ENCODE measurements at regions of chr3 and their contacts with region 1.

Region 1: GRCh38 chr3:68458581-68458980 is 473.8 kb downstream of the TAFA4 start:
- DNase-seq: no peak
- H3K4me3 ChIP-seq: no peak overlapping the region
- H3K27ac ChIP-seq: no peak overlapping the region
- H3K4me1 ChIP-seq: no peaks in the 10 kb centered on the region
- H3K27me3 ChIP-seq: no peaks in the 10 kb centered on the region
- CTCF ChIP-seq: no peak
- EP300 ChIP-seq: no peak
- POLR2A ChIP-seq: no peak
- RAD21 ChIP-seq: no peak

Region 2: GRCh38 chr3:68447885-68448284 is 10.7 kb before region 1 on chr3:
- CTCF ChIA-PET with region 1: interaction called, 13 read pairs
- POLR2A ChIA-PET with region 1: no interaction called
- DNase-seq: no peak
- H3K4me3 ChIP-seq: no peak overlapping the region
- H3K27ac ChIP-seq: no peak overlapping the region
- H3K4me1 ChIP-seq: peaks cover 0 to 3% (median 0%) of the 10 kb centered on the region in 4 experiments; a peak in 1 of 7 replicates
- H3K27me3 ChIP-seq: no peaks in the 10 kb centered on the region
- CTCF ChIP-seq: peak; percentile 18 to 41 (median 31); a peak in 3 of 4 replicates
- EP300 ChIP-seq: no peak
- POLR2A ChIP-seq: no peak
- RAD21 ChIP-seq: peak; percentile 67 to 70